ENCODE measurements at regions of chrX and their contacts with region 1.

Region 1: DNA sequence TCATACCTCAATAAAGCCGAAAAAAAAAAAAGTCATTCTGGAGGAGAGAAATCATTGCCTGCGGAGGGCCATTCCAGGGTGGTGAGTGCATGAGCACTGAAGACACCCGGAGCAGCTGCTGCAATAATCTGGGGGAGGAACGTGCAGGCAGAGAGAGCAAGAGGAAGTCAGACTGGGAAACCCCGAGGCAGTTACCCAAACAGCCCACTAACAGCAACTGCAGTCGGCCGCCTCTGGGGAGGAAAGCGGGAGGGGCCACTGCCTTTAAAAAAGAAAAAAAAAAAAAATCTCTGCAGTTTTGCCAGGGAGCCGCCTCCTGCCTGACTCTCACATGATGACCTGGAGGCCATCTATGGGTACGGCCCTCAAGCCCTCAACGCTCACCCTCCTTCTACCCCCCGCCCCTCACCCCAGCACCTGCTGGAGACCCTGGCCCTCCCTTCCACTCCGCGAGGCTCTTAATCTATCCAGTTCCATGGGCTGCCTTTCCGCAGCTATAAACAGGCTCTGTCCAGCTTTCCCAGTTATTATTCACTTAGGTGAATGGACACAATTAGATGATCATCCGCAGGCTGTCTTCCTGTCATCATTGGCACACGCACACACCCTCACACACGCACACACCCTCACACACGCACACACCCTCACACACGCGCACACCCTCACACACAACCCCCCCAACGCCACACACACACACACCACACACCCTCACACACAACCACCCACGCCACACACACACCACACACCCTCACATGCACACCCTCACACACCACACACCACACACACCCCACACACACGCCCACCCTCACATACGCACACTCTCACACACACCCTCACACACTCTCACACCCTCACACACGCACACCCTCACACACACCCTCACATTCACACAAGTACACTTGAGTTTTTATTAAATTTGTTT is 3.4 kb upstream of the AVPR2 start:
- DNase-seq: peak; percentile 23 to 87 (median 52)
- ATAC-seq: peak; percentile 86
- H3K4me3 ChIP-seq: no peak overlapping the region
- H3K4me3 Mint-ChIP-seq: peak overlapping the region; percentile 37
- H3K27ac ChIP-seq: no peak overlapping the region
- H3K27ac Mint-ChIP-seq: peak overlapping the region; percentile 39
- H3K4me1 ChIP-seq: peaks cover 58% of the 10 kb centered on the region
- H3K4me1 Mint-ChIP-seq: peaks cover 50% of the 10 kb centered on the region
- H3K27me3 ChIP-seq: no peaks in the 10 kb centered on the region
- H3K27me3 Mint-ChIP-seq: no peaks in the 10 kb centered on the region
- CTCF ChIP-seq: no peak

Region 2: GRCh38 chrX:153818571-153819383 is 82.3 kb before region 1 on chrX:
- CTCF ChIA-PET with region 1: no interaction called
- POLR2A ChIA-PET with region 1: no interaction called
- intact Hi-C with region 1: loop called in 1 of 2 experiments (anchors 5 kb)
- DNase-seq: peak in 13 of 14 experiments; percentile 13 to 81 (median 49)
- ATAC-seq: peak; percentile 67
- H3K4me3 ChIP-seq: peak overlapping the region; percentile 49
- H3K4me3 Mint-ChIP-seq: peak overlapping the region; percentile 66
- H3K27ac ChIP-seq: no peak overlapping the region
- H3K27ac Mint-ChIP-seq: no peak overlapping the region
- H3K4me1 ChIP-seq: peaks cover 78% of the 10 kb centered on the region
- H3K4me1 Mint-ChIP-seq: peaks cover 49% of the 10 kb centered on the region
- H3K27me3 ChIP-seq: no peaks in the 10 kb centered on the region
- H3K27me3 Mint-ChIP-seq: no peaks in the 10 kb centered on the region
- CTCF ChIP-seq: no peak

Region 3: DNA sequence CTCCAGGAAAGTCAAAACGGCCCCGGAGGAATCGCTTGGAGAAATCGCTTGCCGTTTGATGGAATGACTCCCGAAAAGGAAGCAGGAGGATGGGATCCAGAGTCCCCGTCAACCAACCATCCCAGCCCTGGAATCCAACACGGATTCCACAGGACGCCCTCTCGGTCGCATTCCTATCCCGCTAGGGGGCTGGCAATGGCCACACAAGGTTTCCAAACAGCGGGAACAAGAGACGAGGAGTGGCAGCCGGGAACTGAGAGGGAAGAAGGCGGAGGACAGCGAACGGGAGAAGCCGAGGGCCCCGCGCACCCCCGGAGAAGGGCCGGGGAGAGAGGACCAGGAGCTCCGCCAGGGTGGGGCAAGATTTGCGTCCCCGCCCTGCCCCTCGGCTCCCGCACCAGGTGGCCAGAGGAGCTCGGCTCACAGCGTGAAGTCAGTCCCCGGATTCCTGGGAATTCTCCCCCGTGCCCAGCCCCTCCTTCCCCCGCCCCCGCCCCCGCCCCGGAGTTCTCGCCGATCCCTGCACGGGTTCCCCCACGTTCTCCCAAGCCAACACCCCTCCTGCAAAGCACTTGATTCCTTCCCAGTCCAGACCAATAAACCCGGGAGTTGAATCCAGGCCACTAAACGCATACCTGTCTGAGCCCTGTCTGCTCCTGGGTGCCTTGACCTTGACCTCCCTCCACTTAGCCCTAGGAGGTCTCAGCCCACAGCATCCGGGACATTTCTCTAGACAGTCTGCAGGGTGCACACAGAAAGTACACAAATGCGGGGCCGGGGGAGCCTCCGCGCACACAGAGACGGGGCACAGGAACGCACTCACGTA is 72.2 kb before region 1 on chrX:
- CTCF ChIA-PET with region 1: interaction called, 3 read pairs
- POLR2A ChIA-PET with region 1: no interaction called
- intact Hi-C with region 1: loop called in 1 of 2 experiments (anchors 5 kb)
- DNase-seq: peak in 1 of 14 experiments; percentile 23
- ATAC-seq: peak; percentile 43
- H3K4me3 ChIP-seq: peak overlapping the region; percentile 34
- H3K4me3 Mint-ChIP-seq: peak overlapping the region; percentile 78
- H3K27ac ChIP-seq: no peak overlapping the region
- H3K27ac Mint-ChIP-seq: no peak overlapping the region
- H3K4me1 ChIP-seq: peaks cover 34% of the 10 kb centered on the region
- H3K4me1 Mint-ChIP-seq: peaks cover 26% of the 10 kb centered on the region
- H3K27me3 ChIP-seq: no peaks in the 10 kb centered on the region
- H3K27me3 Mint-ChIP-seq: no peaks in the 10 kb centered on the region
- CTCF ChIP-seq: no peak

Measured in CD4-positive, alpha-beta T cell (primary cell).